Endothelial cell of umbilical vein (primary cell): ENCODE measurements at regions of chr6 and their contacts with region 1.

Region 1: GRCh38 chr6:36027501-36028087 is at the start of gene MAPK14:
- DNase-seq: peak; percentile 100
- H3K4me3 ChIP-seq: peak within 1 kb of the TSS; percentile 71 to 96 (median 96)
- H3K27ac ChIP-seq: peak within 1 kb of the TSS; percentile 61
- H3K4me1 ChIP-seq: peaks cover 21% of the 10 kb centered on the region
- H3K27me3 ChIP-seq: no peaks in the 10 kb centered on the region
- CTCF ChIP-seq: peak; percentile 85 to 89
- POLR2A ChIP-seq: peak; percentile 95
- total RNA-seq, gene MAPK14: 50.6 and 54.1 TPM in 2 replicates

Region 2: DNA sequence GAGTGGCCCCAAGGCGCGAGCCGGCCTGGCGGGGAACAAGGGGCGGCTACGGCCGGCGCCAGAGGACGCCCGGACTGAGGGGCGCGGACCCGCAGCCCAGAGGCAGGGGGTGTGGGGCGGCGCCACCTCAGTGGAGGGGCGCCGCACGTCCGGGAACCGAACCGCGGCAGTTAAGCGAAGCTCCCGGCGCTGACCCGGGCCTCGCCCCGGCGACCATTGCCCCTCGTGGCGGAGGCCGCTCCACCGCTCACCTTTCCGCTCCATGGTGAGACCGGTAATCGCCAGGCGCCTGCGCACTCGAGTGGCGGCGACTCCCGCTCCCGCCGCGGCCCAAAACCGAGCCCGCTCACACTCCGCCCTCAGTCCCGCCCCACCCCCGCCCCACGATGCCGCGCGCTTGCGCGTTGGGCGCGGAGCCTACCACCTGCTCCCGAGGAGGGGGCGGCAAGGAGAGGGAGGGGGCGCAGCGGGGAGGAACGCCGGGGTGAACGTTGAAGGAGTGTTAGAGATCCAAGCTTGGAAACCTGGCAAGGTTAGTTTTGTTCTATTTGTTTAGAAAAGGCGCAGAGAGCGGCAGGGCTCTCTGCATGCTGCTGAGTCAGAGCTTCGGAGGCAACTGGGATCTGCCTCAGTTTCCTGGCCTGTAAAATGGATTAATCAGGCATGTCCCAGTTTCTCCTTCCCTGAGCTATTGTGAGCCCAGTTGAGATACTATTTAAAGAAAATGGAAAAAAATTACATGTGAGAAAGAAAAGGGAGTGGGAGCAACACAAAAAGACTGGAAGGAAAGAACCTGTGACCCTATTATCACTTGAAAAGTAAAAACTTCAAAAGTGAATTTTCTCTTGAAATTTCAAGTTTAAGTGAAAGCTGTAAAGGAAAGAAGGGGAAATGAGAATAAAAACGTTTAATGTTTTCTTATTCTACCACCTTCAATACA is 106.5 kb before region 1 on chr6 and contains the start of gene SRPK1:
- CTCF ChIA-PET with region 1: interaction called, 3 read pairs
- POLR2A ChIA-PET with region 1: no interaction called
- dilution Hi-C with region 1: no loop called
- intact Hi-C with region 1: loop called (anchors 2 kb)
- DNase-seq: peak; percentile 87
- H3K4me3 ChIP-seq: peak within 1 kb of the TSS; percentile 86 to 96 (median 89)
- H3K27ac ChIP-seq: peak within 1 kb of the TSS; percentile 65
- H3K4me1 ChIP-seq: peaks cover 25% of the 10 kb centered on the region
- H3K27me3 ChIP-seq: no peaks in the 10 kb centered on the region
- CTCF ChIP-seq: no peak
- POLR2A ChIP-seq: peak; percentile 79
- total RNA-seq, gene SRPK1: 72.7 and 82.2 TPM in 2 replicates

Region 3: GRCh38 chr6:36094753-36095496 is 67.3 kb after region 1 on chr6:
- CTCF ChIA-PET with region 1: interaction called, 155 read pairs
- POLR2A ChIA-PET with region 1: interaction called, 5 read pairs
- dilution Hi-C with region 1: no loop called
- intact Hi-C with region 1: loop called (anchors 1 kb)
- DNase-seq: peak; percentile 83
- H3K4me3 ChIP-seq: no peak overlapping the region
- H3K27ac ChIP-seq: no peak overlapping the region
- H3K4me1 ChIP-seq: peaks cover 8% of the 10 kb centered on the region
- H3K27me3 ChIP-seq: no peaks in the 10 kb centered on the region
- CTCF ChIP-seq: peak; percentile 93 to 94
- POLR2A ChIP-seq: no peak

Region 4: GRCh38 chr6:36131511-36132245 is 104.1 kb after region 1 on chr6:
- CTCF ChIA-PET with region 1: interaction called, 9 read pairs
- POLR2A ChIA-PET with region 1: interaction called, 10 read pairs
- dilution Hi-C with region 1: no loop called
- intact Hi-C with region 1: loop called (anchors 1 kb)
- DNase-seq: peak; percentile 99
- H3K4me3 ChIP-seq: no peak overlapping the region
- H3K27ac ChIP-seq: peak overlapping the region; percentile 71
- H3K4me1 ChIP-seq: peaks cover 45% of the 10 kb centered on the region
- H3K27me3 ChIP-seq: no peaks in the 10 kb centered on the region
- CTCF ChIP-seq: no peak
- POLR2A ChIP-seq: peak; percentile 66

Region 5: GRCh38 chr6:36196880-36197548 is 169.4 kb after region 1 on chr6:
- CTCF ChIA-PET with region 1: interaction called, 7 read pairs
- POLR2A ChIA-PET with region 1: no interaction called
- dilution Hi-C with region 1: no loop called
- intact Hi-C with region 1: loop called (anchors 1 kb)
- DNase-seq: peak; percentile 98
- H3K4me3 ChIP-seq: peak overlapping the region; percentile 56 to 90 (median 67)
- H3K27ac ChIP-seq: peak overlapping the region; percentile 83
- H3K4me1 ChIP-seq: peaks cover 12% of the 10 kb centered on the region
- H3K27me3 ChIP-seq: no peaks in the 10 kb centered on the region
- CTCF ChIP-seq: no peak
- POLR2A ChIP-seq: peak; percentile 59

Region 6: DNA sequence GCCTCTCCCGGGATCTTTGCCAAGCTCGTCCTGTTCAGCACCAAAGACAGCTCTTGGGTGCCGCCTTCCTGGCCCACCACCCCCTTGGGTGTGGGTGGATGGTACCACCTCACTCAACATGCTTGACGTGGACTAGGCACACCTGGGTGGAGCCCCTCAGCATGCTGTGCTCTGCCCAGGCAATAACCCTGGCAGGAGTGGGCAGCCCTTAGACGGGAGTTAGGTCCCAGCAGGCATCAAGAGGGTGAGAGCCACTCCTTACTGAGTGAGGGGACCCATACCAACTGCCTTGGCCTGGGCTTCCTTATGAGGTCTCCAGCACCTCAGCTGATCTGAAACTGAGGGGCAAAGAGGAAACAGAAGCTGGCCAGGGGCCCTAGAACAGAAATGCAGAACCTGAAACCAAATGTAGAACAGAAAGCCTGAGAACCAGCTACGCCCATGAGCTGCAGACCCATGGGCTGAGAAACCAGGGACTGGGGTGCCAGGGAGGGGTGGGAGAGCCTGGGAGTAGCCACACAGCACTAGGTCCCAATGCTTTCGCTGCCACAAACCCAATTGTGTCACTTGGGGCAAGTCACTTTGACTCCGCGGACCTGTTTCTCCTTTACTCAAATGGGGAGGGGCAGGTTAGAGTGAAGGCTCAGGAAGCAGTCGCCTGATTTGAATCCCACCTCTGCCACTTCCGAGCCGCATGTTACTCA is 979.9 kb after region 1 on chr6:
- CTCF ChIA-PET with region 1: no interaction called
- POLR2A ChIA-PET with region 1: no interaction called
- dilution Hi-C with region 1: no loop called
- intact Hi-C with region 1: no loop called
- DNase-seq: no peak
- H3K4me3 ChIP-seq: no peak overlapping the region
- H3K27ac ChIP-seq: no peak overlapping the region
- H3K4me1 ChIP-seq: no peaks in the 10 kb centered on the region
- H3K27me3 ChIP-seq: no peaks in the 10 kb centered on the region
- CTCF ChIP-seq: no peak
- POLR2A ChIP-seq: no peak